ENCODE measurements at regions of chr7 and their contacts with region 1.

Region 1: GRCh38 chr7:30284298-30285066 is at the start of gene ZNRF2:
- DNase-seq: peak; percentile 98
- ATAC-seq: peak; percentile 92 to 99 (median 98)
- H3K4me3 ChIP-seq: peak within 1 kb of the TSS; percentile 45 to 95 (median 81)
- H3K27ac ChIP-seq: peak within 1 kb of the TSS; percentile 83 to 99 (median 98)
- H3K4me1 ChIP-seq: peaks cover 4 to 42% (median 29%) of the 10 kb centered on the region in 9 donors
- H3K27me3 ChIP-seq: no peaks in the 10 kb centered on the region
- CTCF ChIP-seq: peak; percentile 11 to 83 (median 53)
- total RNA-seq, gene ZNRF2: 5.3 to 13.8 (median 8.8) TPM

Region 2: DNA sequence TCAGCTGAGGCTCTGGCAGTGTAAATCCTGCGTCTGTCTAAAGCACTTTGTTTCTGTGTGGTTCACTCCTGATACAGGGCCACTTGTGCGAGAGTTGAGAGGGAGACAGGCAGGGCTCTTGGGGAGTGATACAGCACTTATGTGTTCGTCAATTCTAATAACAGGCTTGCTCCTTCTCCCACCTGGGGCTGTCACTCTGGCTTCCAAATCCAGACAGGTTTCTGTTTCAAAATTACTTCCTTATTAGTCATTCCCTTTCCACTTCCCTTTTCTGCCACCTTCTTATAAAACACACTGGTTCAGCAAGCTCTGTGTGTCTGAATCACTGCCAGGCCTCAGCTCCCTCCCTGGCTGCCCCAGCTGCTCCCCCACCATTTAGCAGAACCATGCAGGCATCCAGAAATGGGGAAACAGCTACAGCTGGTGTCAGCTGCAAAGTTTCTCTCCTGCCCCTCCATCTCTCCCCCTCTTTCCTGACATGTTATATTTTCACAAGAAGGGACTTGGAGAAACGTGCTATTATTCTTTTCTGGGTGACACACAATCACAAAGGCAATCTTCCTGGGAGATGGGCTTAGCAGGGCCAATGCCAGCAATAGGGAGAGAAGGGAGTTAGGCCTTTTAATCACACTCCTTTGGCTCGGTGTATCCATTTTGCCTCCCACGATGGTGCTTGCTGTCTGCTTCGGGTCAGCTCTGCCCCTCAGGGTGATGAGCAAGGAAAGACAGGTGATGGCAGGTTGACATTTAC is 58.4 kb before region 1 on chr7:
- intact Hi-C with region 1: no loop called
- DNase-seq: peak; percentile 43 to 63
- ATAC-seq: peak; percentile 74 to 95 (median 90)
- H3K4me3 ChIP-seq: no peak overlapping the region
- H3K27ac ChIP-seq: peak overlapping the region in 9 of 10 donors; percentile 13 to 79 (median 63)
- H3K4me1 ChIP-seq: peaks cover 0 to 46% (median 15%) of the 10 kb centered on the region in 9 donors
- H3K27me3 ChIP-seq: no peaks in the 10 kb centered on the region
- CTCF ChIP-seq: no peak

Region 3: DNA sequence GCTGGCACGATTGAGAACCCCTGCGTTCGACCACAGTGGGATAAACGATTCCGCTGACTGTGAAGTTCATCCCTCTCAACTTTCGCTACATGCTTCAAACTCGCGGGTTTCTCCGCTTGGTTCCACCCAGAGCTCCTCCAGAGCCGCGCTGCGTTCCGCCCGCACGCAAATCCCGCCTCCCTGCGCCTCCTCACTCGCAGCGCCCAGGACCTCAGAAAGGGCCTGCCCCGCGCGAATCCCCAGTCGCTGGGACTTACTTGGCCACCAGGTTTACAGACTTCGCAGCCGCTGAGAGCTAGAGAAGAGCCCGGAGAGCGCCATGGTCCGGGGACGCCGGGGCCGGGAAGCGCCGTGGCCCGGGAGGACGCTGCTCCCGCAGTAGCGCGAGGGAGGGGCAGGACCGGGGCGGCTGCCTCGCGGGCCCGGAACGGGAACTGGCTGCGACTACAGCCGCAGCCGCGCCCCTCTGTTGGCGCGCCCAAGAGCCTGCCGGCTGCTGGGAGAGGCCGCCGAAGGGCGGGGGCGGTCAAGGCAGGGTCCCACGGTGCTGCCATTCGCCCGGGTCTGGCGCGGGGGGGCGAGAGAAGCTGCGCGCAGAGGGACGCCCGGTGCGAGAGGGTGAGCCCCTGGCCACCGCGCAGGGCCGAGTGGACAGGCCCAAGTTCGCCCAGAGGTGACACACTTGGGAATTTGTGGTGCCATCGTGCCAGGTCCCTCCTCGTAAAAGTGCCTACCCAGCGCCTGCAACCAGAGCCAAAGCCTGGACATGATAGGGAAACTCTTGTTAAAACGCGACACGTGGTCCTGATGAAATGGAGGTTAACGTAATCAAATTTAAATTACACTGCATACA is 194.1 kb after region 1 on chr7 and contains the start of gene NOD1:
- intact Hi-C with region 1: loop called in 1 of 10 experiments (anchors 10 kb)
- DNase-seq: peak; percentile 78 to 85
- ATAC-seq: peak; percentile 92 to 95 (median 94)
- H3K4me3 ChIP-seq: peak within 1 kb of the TSS; percentile 60 to 88 (median 81)
- H3K27ac ChIP-seq: peak within 1 kb of the TSS; percentile 88 to 99 (median 96)
- H3K4me1 ChIP-seq: peaks cover 13 to 55% (median 50%) of the 10 kb centered on the region in 9 donors
- H3K27me3 ChIP-seq: no peaks in the 10 kb centered on the region
- CTCF ChIP-seq: peak in 4 of 9 donors; percentile 24 to 48 (median 38)
- total RNA-seq, gene NOD1: 6.3 to 19.1 (median 8.6) TPM

Region 4: GRCh38 chr7:30521532-30521931 is 237.1 kb after region 1 on chr7:
- intact Hi-C with region 1: no loop called
- DNase-seq: peak; percentile 22 to 50
- ATAC-seq: peak in 7 of 8 donors; percentile 19 to 82 (median 67)
- H3K4me3 ChIP-seq: no peak overlapping the region
- H3K27ac ChIP-seq: peak overlapping the region in 1 of 10 donors; percentile 41
- H3K4me1 ChIP-seq: peaks cover 0 to 13% (median 8%) of the 10 kb centered on the region in 9 donors
- H3K27me3 ChIP-seq: no peaks in the 10 kb centered on the region
- CTCF ChIP-seq: no peak

Region 5: DNA sequence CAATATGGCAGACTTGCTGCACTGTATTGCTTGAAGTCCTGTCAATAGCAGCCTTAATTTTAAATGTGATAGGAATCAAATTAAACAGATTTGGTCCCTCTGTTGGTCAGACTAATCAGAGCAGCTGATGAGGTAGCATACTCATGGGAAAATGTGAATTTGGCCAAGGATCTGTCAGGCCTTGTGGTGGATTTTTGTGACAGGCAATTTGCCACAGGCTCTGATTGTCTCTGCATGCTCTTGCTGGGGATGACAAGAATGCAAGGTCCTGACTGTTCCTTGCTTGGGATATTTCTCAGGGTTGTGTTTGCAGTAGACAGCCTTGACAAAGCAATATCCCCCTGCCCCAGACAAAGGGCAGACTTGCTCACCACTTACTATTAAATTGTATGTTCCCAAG is 268.7 kb after region 1 on chr7:
- intact Hi-C with region 1: no loop called
- DNase-seq: no peak
- ATAC-seq: no peak
- H3K4me3 ChIP-seq: no peak overlapping the region
- H3K27ac ChIP-seq: no peak overlapping the region
- H3K4me1 ChIP-seq: peaks cover 0 to 34% (median 22%) of the 10 kb centered on the region in 9 donors
- H3K27me3 ChIP-seq: no peaks in the 10 kb centered on the region
- CTCF ChIP-seq: no peak

Measured in heart right ventricle (tissue), 16 donors.